ENCODE measurements at regions of chr22 and their contacts with region 1.

Region 1: GRCh38 chr22:17559188-17559587 is 4.1 kb upstream of the SLC25A18 start:
- DNase-seq: no peak
- H3K4me3 ChIP-seq: no peak overlapping the region
- CTCF ChIP-seq: no peak

Region 2: GRCh38 chr22:17339095-17339693 is 220.0 kb before region 1 on chr22:
- CTCF ChIA-PET with region 1: no interaction called
- POLR2A ChIA-PET with region 1: no interaction called
- DNase-seq: no peak
- H3K4me3 ChIP-seq: no peak overlapping the region
- CTCF ChIP-seq: no peak

Region 3: GRCh38 chr22:17570851-17571641 is 11.9 kb after region 1 on chr22:
- CTCF ChIA-PET with region 1: interaction called, 26 read pairs
- POLR2A ChIA-PET with region 1: interaction called, 3 read pairs
- DNase-seq: no peak
- H3K4me3 ChIP-seq: peak overlapping the region; percentile 42
- CTCF ChIP-seq: no peak

Region 4: GRCh38 chr22:17726464-17727246 is 167.5 kb after region 1 on chr22:
- CTCF ChIA-PET with region 1: interaction called, 14 read pairs
- POLR2A ChIA-PET with region 1: no interaction called
- DNase-seq: peak; percentile 61
- H3K4me3 ChIP-seq: peak overlapping the region; percentile 15; the same call in 1 of the 2 replicates
- CTCF ChIP-seq: no peak

Region 5: GRCh38 chr22:17734187-17734586 is 175.0 kb after region 1 on chr22:
- CTCF ChIA-PET with region 1: interaction called, 14 read pairs
- POLR2A ChIA-PET with region 1: no interaction called
- DNase-seq: peak; percentile 31
- H3K4me3 ChIP-seq: no peak overlapping the region
- CTCF ChIP-seq: no peak

Measured in AG04449 (cell line).